Mammary epithelial cell (primary cell): ENCODE measurements at regions of chr17 and their contacts with region 1.

Region 1: DNA sequence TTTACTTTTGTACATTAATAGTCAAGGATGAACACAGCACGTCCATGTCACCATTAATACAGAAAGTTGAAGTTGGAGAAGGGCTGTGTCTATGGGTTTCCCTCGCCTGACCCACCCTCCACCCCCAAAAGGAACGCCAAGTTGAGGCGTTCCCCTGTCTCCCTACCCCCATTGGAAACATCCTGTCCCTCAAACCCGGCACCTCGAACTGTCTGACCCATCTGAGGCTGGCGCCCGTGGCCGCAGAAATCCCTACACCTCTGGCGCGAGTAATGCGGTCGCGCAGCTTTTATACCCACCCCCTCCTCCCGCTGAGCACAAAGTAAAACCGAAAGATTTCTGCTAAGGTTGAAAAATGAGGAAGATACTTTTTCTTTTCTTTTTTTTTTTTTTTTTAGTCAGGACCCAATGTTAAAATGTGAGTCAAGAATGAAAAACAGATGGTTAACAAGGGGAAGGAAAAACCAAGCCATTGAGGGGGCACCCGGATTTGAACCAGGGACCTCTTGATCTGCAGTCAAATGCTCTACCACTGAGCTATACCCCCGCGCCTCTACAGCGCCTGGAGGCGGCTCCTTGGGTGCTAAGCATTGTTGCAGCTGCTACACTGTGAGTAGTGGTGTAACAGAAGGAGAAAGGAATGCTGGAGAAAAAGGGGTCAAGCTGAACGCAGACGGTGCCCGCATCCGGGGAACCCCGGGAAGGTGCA is 887 bp upstream of the LASP1 start:
- DNase-seq: peak; percentile 84
- H3K4me3 ChIP-seq: peak overlapping the region; percentile 66 to 84 (median 73)
- H3K27ac ChIP-seq: peak overlapping the region; percentile 26
- H3K4me1 ChIP-seq: peaks cover 49% of the 10 kb centered on the region
- H3K27me3 ChIP-seq: no peaks in the 10 kb centered on the region
- CTCF ChIP-seq: peak; percentile 7 to 49

Region 2: DNA sequence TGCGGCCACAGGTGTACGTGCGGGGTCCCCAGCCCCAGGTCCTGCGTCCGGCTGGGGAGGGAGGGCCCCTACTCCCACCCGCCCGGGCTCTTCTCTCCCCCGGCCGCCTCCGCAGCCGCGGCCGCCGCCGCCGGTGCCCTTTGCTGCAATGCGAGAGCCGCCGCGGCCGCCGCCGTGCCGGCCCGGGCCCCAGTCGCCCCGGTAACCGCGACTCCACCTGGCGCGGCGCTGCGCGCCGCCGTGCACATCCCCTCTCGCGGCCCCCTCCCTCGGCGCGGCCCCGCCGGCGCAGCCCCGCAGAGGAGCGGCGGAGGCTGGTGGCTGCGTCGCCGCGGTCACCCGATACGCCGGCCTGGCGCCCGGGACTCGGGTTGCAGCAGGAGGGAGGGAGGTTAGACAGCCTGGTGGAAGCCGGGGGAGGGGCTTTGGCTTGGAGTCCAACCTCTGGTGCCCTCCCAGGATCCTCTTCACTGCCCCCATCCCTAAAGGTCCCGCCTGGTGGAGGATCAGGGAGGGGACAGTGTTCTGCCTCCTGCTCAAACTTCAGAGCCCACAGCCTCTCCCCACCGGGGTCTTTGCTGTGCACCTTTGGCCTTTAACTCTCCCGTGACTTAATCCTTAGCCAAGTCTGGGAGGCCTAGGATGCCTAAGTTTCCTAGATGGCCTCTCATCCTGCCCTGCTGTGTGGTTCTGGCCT is 296.2 kb before region 1 on chr17:
- CTCF ChIA-PET with region 1: no interaction called
- dilution Hi-C with region 1: no loop called
- in situ Hi-C with region 1: no loop called
- intact Hi-C with region 1: no loop called
- DNase-seq: no peak
- H3K4me3 ChIP-seq: no peak overlapping the region
- H3K27ac ChIP-seq: no peak overlapping the region
- H3K4me1 ChIP-seq: peaks cover 21% of the 10 kb centered on the region
- H3K27me3 ChIP-seq: peaks cover 11% of the 10 kb centered on the region
- CTCF ChIP-seq: no peak

Region 3: GRCh38 chr17:38681096-38681495 is 187.9 kb before region 1 on chr17:
- CTCF ChIA-PET with region 1: no interaction called
- dilution Hi-C with region 1: no loop called
- in situ Hi-C with region 1: no loop called
- intact Hi-C with region 1: loop called (anchors 2 kb)
- DNase-seq: no peak
- H3K4me3 ChIP-seq: no peak overlapping the region
- H3K27ac ChIP-seq: no peak overlapping the region
- H3K4me1 ChIP-seq: peaks cover 1% of the 10 kb centered on the region
- H3K27me3 ChIP-seq: no peaks in the 10 kb centered on the region
- CTCF ChIP-seq: no peak

Region 4: GRCh38 chr17:38799378-38800236 is 69.4 kb before region 1 on chr17 and contains the start of gene PIP4K2B:
- CTCF ChIA-PET with region 1: no interaction called
- dilution Hi-C with region 1: loop called (anchors 5 kb)
- in situ Hi-C with region 1: no loop called
- intact Hi-C with region 1: no loop called
- DNase-seq: peak; percentile 95
- H3K4me3 ChIP-seq: peak within 1 kb of the TSS; percentile 73 to 95 (median 86)
- H3K27ac ChIP-seq: peak within 1 kb of the TSS; percentile 85
- H3K4me1 ChIP-seq: peaks cover 17% of the 10 kb centered on the region
- H3K27me3 ChIP-seq: no peaks in the 10 kb centered on the region
- CTCF ChIP-seq: no peak
- total RNA-seq, gene PIP4K2B: 34.6 to 55.7 TPM

Region 5: GRCh38 chr17:38853292-38854219 is 15.4 kb before region 1 on chr17 and contains the start of gene RPL23:
- CTCF ChIA-PET with region 1: no interaction called
- dilution Hi-C with region 1: no loop called
- in situ Hi-C with region 1: no loop called
- intact Hi-C with region 1: loop called (anchors 1 kb)
- DNase-seq: peak; percentile 94
- H3K4me3 ChIP-seq: peak within 1 kb of the TSS; percentile 59 to 98 (median 86)
- H3K27ac ChIP-seq: peak within 1 kb of the TSS; percentile 92
- H3K4me1 ChIP-seq: peaks cover 10% of the 10 kb centered on the region
- H3K27me3 ChIP-seq: no peaks in the 10 kb centered on the region
- CTCF ChIP-seq: no peak
- total RNA-seq, gene RPL23: 693 to 1,265 TPM

Region 6: GRCh38 chr17:38898812-38899348 is 29.9 kb after region 1 on chr17:
- CTCF ChIA-PET with region 1: no interaction called
- dilution Hi-C with region 1: no loop called
- in situ Hi-C with region 1: no loop called
- intact Hi-C with region 1: loop called (anchors 2 kb)
- DNase-seq: no peak
- H3K4me3 ChIP-seq: no peak overlapping the region
- H3K27ac ChIP-seq: no peak overlapping the region
- H3K4me1 ChIP-seq: peaks cover 26% of the 10 kb centered on the region
- H3K27me3 ChIP-seq: no peaks in the 10 kb centered on the region
- CTCF ChIP-seq: no peak

Region 7: GRCh38 chr17:39069114-39069756 is 200.3 kb after region 1 on chr17:
- CTCF ChIA-PET with region 1: no interaction called
- dilution Hi-C with region 1: loop called (anchors 5 kb)
- in situ Hi-C with region 1: no loop called
- intact Hi-C with region 1: no loop called
- DNase-seq: peak; percentile 32
- H3K4me3 ChIP-seq: no peak overlapping the region
- H3K27ac ChIP-seq: no peak overlapping the region
- H3K4me1 ChIP-seq: peaks cover 19% of the 10 kb centered on the region
- H3K27me3 ChIP-seq: no peaks in the 10 kb centered on the region
- CTCF ChIP-seq: peak; percentile 70 to 75